ENCODE measurements at regions of chr17 and their contacts with region 1.

Region 1: GRCh38 chr17:30468465-30468864 is 8.7 kb upstream of the GOSR1 start:
- DNase-seq: no peak
- H3K4me3 ChIP-seq: no peak overlapping the region
- CTCF ChIP-seq: no peak

Region 2: GRCh38 chr17:30332057-30332542 is 136.4 kb before region 1 on chr17:
- in situ Hi-C with region 1: no loop called
- DNase-seq: peak; percentile 18
- H3K4me3 ChIP-seq: no peak overlapping the region
- CTCF ChIP-seq: no peak

Region 3: DNA sequence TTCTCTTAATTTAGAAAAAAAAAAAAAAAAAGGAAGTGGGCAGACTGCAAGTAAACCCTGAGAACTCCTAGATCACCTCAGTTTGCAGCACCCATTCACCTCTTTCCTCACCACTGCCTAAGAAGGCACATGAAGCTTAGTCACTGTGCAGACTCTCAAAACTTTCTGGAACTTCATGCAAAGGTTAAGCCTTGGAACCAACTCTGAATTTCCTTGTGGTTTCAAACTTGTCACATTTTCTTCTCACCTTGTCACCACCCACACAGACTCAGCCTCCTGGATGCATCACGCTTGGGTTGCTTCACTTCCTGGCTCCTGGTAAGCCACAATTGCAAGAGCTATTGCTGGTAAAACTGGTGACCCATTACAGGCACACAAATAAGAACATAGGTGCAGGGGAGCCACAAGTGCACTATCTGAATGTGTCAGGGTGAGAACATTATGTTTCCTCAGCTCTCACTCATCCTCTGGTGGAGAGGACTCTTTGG is 104.7 kb before region 1 on chr17:
- in situ Hi-C with region 1: no loop called
- DNase-seq: no peak
- H3K4me3 ChIP-seq: no peak overlapping the region
- CTCF ChIP-seq: no peak

Region 4: DNA sequence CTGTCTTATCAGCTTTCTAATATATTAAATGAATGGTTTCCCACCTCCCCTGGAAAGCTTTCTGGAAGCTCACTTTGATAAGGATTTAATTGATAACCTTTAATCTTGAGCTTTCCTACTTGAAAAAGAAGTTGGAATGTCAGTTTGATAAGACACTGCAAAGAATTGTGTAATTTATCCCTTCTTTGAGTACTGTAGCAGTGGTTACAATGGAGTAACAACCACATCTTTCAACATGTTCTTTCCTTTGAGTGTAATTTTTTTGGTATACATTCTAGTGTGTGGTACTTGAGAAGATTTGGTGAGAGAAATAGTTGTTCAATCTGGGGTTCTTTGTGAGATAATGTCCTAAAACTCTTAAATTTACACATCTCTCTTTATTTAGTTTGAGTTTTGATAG is 46.3 kb before region 1 on chr17:
- in situ Hi-C with region 1: loop called (anchors 5 kb)
- DNase-seq: no peak
- H3K4me3 ChIP-seq: no peak overlapping the region
- CTCF ChIP-seq: no peak

Region 5: GRCh38 chr17:30513346-30513745 is 44.9 kb after region 1 on chr17:
- in situ Hi-C with region 1: no loop called
- DNase-seq: no peak
- H3K4me3 ChIP-seq: no peak overlapping the region
- CTCF ChIP-seq: no peak

Measured in astrocyte of the cerebellum (primary cell).